ENCODE measurements at regions of chr12 and their contacts with region 1.

Region 1: GRCh38 chr12:31813305-31813704 is 84.5 kb upstream of the AMN1 start:
- DNase-seq: no peak
- H3K4me3 Mint-ChIP-seq: no peak overlapping the region
- H3K27ac Mint-ChIP-seq: no peak overlapping the region
- H3K4me1 Mint-ChIP-seq: peaks cover 18% of the 10 kb centered on the region
- H3K27me3 Mint-ChIP-seq: no peaks in the 10 kb centered on the region

Region 2: DNA sequence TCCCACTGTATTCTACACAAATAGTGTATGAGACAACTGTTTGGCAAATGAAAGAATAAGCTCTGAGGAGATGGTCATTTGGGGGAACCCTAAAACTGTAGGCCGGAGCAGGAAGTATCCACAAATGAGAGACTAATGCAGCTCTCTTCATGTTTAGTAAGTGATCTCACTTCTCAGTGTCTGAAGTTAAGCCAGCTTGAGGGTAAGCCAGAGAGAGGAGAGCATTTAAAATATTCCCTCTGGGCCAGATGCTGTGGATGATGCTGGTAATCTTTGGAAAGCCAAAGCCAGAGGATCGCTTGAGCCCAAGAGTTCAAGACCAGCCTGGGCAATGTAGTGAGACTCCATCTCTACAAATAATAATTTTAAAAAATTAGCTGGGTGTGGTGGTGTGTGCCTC is 356.7 kb before region 1 on chr12:
- CTCF ChIA-PET with region 1: no interaction called
- POLR2A ChIA-PET with region 1: no interaction called
- intact Hi-C with region 1: no loop called
- DNase-seq: no peak
- H3K4me3 Mint-ChIP-seq: no peak overlapping the region
- H3K27ac Mint-ChIP-seq: no peak overlapping the region
- H3K4me1 Mint-ChIP-seq: no peaks in the 10 kb centered on the region
- H3K27me3 Mint-ChIP-seq: peaks cover 2% of the 10 kb centered on the region

Region 3: DNA sequence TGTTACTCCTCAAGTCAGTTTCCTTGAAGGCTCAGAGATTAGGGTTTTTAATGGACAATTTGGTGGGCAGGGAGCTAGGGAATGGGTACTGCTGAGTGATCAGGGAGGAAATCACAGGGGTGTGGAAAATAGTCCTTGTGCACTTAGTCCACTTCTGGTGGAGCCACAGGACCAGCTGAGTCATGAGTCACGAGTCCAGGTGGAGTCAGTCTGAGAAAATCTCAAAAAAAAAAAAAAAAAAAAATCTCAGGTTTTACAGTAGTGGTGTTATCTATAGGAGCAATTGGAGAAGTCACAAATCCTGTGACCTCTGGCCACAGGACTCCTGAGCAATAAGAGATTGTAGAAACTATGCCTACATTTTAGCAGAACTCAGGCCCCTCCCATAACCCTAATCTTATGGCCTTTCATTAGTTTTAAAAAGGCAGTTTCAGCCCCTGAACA is 56.3 kb before region 1 on chr12:
- CTCF ChIA-PET with region 1: no interaction called
- POLR2A ChIA-PET with region 1: no interaction called
- intact Hi-C with region 1: loop called (anchors 2 kb)
- DNase-seq: no peak
- H3K4me3 Mint-ChIP-seq: no peak overlapping the region
- H3K27ac Mint-ChIP-seq: no peak overlapping the region
- H3K4me1 Mint-ChIP-seq: peaks cover 11% of the 10 kb centered on the region
- H3K27me3 Mint-ChIP-seq: no peaks in the 10 kb centered on the region

Region 4: DNA sequence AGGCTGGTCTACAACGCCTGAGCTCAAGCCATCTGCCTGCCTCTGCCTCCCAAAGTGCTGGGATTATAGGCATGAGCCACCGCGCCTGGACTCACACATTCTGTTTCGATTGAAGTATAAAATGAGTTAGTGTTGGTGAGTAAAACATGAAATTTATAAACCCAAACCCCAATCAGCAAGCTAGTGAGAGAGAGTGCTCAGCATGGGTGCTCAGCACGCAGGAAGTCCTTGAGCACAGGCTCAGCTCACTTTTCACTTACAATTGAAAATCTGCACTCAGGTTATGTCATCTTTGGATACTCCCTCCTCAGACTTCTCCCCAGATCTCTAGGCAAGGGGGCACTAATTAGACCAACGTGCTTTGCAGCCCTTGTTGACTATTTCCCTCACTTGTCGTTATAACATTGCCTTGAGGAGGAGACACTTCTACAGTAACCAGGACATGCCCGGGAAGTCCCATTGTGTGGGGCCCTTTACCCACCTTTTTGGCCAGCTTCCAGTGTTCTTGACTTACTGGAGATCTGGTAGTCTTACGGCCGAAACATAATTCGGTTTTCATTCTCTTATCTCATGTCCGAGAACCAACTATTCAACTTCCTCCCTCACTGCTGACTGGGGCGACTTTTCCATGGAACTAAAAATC is 16.0 kb before region 1 on chr12:
- CTCF ChIA-PET with region 1: no interaction called
- POLR2A ChIA-PET with region 1: no interaction called
- intact Hi-C with region 1: no loop called
- DNase-seq: peak; percentile 30
- H3K4me3 Mint-ChIP-seq: peak overlapping the region; percentile 4
- H3K27ac Mint-ChIP-seq: peak overlapping the region; percentile 57
- H3K4me1 Mint-ChIP-seq: peaks cover 24% of the 10 kb centered on the region
- H3K27me3 Mint-ChIP-seq: no peaks in the 10 kb centered on the region

Region 5: GRCh38 chr12:31832740-31833729 is 19.7 kb after region 1 on chr12:
- CTCF ChIA-PET with region 1: no interaction called
- POLR2A ChIA-PET with region 1: no interaction called
- intact Hi-C with region 1: loop called (anchors 2 kb)
- DNase-seq: peak; percentile 52
- H3K4me3 Mint-ChIP-seq: no peak overlapping the region
- H3K27ac Mint-ChIP-seq: peak overlapping the region; percentile 70
- H3K4me1 Mint-ChIP-seq: peaks cover 39% of the 10 kb centered on the region
- H3K27me3 Mint-ChIP-seq: no peaks in the 10 kb centered on the region

Region 6: DNA sequence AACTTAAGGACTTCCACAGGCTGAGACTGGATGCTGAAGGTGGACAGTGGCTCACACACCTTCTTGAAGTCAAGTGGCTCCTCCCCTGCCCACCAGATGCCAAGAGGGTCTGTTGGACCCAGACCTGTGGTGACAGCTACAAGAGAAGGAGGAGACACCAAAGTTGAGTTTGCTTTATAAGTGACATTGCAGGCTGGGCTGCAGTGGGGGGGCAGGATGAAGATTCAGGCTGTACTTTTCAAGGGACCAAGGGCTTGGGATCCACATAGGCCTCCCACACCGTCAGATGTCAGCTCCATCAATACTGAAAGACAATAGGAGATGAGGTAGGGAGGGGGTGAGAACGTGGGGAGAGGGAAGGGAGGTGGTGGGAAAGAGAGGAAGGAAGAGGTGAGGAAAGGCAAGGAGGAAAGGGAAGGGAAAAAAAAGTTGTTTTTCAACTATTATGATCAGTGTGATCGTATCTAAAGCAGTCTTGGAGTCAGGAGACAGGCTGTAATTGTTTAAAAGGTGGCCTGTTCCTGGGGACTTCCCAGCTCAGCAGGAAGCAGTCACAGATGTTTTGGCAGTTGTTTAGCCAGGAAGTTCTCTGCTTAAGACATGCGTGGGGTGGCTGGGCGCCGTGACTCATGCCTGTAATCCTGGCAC is 61.8 kb after region 1 on chr12:
- CTCF ChIA-PET with region 1: no interaction called
- POLR2A ChIA-PET with region 1: interaction called, 6 read pairs
- intact Hi-C with region 1: loop called (anchors 1 kb)
- DNase-seq: peak; percentile 86
- H3K4me3 Mint-ChIP-seq: peak overlapping the region; percentile 47
- H3K27ac Mint-ChIP-seq: peak overlapping the region; percentile 97
- H3K4me1 Mint-ChIP-seq: peaks cover 27% of the 10 kb centered on the region
- H3K27me3 Mint-ChIP-seq: no peaks in the 10 kb centered on the region

Region 7: DNA sequence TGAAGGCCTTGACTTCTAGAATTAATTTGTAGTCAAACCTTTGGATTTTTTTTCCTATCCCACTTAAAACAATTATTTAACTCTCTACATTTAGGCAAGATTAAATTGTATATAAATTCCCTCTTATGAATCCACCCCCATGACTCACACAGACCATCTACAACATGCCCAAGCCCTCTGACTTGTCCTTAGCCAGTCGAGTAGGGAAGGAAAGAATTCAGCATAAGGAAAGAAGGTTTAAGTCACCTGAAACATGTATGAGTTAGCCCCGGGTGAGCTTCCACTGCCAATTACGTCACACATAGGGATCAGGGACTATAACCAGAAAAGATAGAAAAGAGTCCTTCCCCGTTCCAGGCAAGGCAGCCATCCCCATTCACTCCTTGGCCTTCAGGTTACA is 131.0 kb after region 1 on chr12:
- CTCF ChIA-PET with region 1: no interaction called
- POLR2A ChIA-PET with region 1: no interaction called
- intact Hi-C with region 1: no loop called
- DNase-seq: no peak
- H3K4me3 Mint-ChIP-seq: no peak overlapping the region
- H3K27ac Mint-ChIP-seq: no peak overlapping the region
- H3K4me1 Mint-ChIP-seq: no peaks in the 10 kb centered on the region
- H3K27me3 Mint-ChIP-seq: no peaks in the 10 kb centered on the region

Region 8: GRCh38 chr12:32598688-32599087 is 785.4 kb after region 1 on chr12:
- CTCF ChIA-PET with region 1: no interaction called
- POLR2A ChIA-PET with region 1: no interaction called
- intact Hi-C with region 1: no loop called
- DNase-seq: no peak
- H3K4me3 Mint-ChIP-seq: no peak overlapping the region
- H3K27ac Mint-ChIP-seq: no peak overlapping the region
- H3K4me1 Mint-ChIP-seq: no peaks in the 10 kb centered on the region
- H3K27me3 Mint-ChIP-seq: no peaks in the 10 kb centered on the region

Measured in activated CD4-positive, alpha-beta memory T cell treated with anti-CD3 and anti-CD28 coated beads for 36 hours (primary cell).